ENCODE measurements at regions of chr13 and their contacts with region 1.

Region 1: GRCh38 chr13:108915634-108916512 is 286.5 kb downstream of the MYO16 start:
- DNase-seq: peak; percentile 95
- H3K4me3 Mint-ChIP-seq: peak overlapping the region; percentile 61
- H3K27ac Mint-ChIP-seq: peak overlapping the region; percentile 90
- H3K4me1 Mint-ChIP-seq: peaks cover 33% of the 10 kb centered on the region
- H3K27me3 Mint-ChIP-seq: no peaks in the 10 kb centered on the region
- CTCF ChIP-seq: no peak

Region 2: DNA sequence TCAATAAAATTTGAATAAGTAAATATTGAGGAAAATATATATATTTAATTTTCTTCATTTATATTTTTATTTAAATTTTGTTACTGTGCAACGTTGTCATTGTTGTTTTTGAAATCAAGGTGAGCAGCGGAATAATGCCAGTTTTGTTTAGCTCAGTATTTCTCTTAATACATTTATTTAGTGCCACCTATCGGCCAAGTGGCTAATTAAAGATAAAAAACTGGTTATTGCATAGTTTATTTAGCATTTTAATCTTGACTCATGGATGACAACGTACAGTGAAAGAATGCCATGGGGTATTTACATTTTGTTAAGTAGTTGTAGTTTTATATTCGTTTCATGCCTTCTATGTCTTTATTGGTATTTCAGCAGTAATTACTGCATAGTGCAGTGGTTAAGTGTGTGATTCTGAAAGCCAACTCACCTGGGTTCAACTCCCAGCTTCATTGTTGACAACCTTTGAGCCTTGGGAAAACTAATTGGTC is 20.6 kb before region 1 on chr13:
- CTCF ChIA-PET with region 1: interaction called, 12 read pairs
- POLR2A ChIA-PET with region 1: no interaction called
- intact Hi-C with region 1: no loop called
- DNase-seq: peak; percentile 67
- H3K4me3 Mint-ChIP-seq: no peak overlapping the region
- H3K27ac Mint-ChIP-seq: no peak overlapping the region
- H3K4me1 Mint-ChIP-seq: no peaks in the 10 kb centered on the region
- H3K27me3 Mint-ChIP-seq: peaks cover 29% of the 10 kb centered on the region
- CTCF ChIP-seq: peak; percentile 60

Region 3: GRCh38 chr13:108929532-108930206 is 13.8 kb after region 1 on chr13:
- CTCF ChIA-PET with region 1: interaction called, 12 read pairs
- POLR2A ChIA-PET with region 1: interaction called, 4 read pairs
- intact Hi-C with region 1: no loop called
- DNase-seq: peak; percentile 46
- H3K4me3 Mint-ChIP-seq: no peak overlapping the region
- H3K27ac Mint-ChIP-seq: no peak overlapping the region
- H3K4me1 Mint-ChIP-seq: peaks cover 14% of the 10 kb centered on the region
- H3K27me3 Mint-ChIP-seq: peaks cover 18% of the 10 kb centered on the region
- CTCF ChIP-seq: no peak

Region 4: GRCh38 chr13:108961542-108962125 is 45.8 kb after region 1 on chr13:
- CTCF ChIA-PET with region 1: interaction called, 74 read pairs
- POLR2A ChIA-PET with region 1: interaction called, 74 read pairs
- intact Hi-C with region 1: loop called (anchors 1 kb)
- DNase-seq: peak; percentile 57
- H3K4me3 Mint-ChIP-seq: no peak overlapping the region
- H3K27ac Mint-ChIP-seq: no peak overlapping the region
- H3K4me1 Mint-ChIP-seq: peaks cover 43% of the 10 kb centered on the region
- H3K27me3 Mint-ChIP-seq: no peaks in the 10 kb centered on the region
- CTCF ChIP-seq: peak; percentile 79

Region 5: DNA sequence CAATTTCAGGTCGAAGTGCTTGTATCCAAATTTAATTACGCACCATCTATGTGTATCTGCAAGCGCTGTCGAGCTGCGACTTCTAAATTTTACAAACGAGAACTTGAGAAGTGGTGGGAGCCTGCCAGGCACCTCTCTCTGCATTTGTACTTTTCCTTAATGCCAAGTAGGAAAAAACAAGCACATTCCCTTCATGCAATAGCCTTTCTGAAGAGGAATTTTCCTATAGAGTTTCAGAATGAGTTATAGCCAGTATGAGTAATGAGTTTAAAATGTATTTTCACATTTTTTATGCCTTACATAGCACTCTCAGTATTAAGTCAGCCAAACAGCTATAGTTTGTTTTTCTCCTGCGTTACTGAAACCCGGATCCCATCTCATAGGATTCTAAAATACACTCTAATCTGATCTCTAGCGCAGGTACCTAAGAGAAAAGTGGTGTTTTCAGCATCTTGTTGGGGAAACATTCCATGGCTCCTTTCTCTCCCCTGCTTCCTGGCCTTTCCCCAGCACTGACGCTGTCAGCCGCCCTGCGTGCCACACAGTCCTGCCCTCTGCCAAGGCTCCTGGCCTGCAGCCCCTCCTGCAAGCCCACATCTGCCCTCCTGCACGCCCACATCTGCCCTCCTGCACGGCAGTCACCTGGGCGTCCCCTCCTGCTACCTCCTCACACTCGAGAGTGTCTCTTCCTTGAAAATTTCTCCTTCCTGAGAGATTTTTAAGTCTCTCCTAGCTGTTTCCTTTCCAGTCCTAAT is 240.5 kb after region 1 on chr13:
- CTCF ChIA-PET with region 1: interaction called, 6 read pairs
- POLR2A ChIA-PET with region 1: interaction called, 21 read pairs
- intact Hi-C with region 1: no loop called
- DNase-seq: peak; percentile 82
- H3K4me3 Mint-ChIP-seq: peak overlapping the region; percentile 64
- H3K27ac Mint-ChIP-seq: peak overlapping the region; percentile 95
- H3K4me1 Mint-ChIP-seq: peaks cover 61% of the 10 kb centered on the region
- H3K27me3 Mint-ChIP-seq: no peaks in the 10 kb centered on the region
- CTCF ChIP-seq: no peak

Region 6: DNA sequence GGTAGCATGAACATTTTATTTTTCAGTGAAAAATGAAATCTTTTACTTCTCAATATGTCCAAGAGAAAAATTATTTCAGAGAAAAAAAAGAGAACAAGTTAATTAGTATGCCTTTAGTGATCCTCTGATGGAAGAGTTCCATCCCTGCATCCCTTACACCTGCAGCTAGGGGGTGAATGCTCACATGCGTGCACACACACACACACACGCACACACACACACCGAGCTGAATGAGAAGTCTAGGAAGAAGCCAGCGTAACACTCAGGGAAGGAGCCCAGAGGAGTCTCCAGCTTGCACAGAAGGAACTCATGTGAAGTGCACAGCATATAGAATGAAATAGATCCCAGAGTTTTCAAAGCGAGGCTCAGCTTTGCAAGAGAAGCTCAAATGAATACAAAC is 360.0 kb after region 1 on chr13:
- CTCF ChIA-PET with region 1: no interaction called
- POLR2A ChIA-PET with region 1: interaction called, 12 read pairs
- intact Hi-C with region 1: loop called (anchors 5 kb)
- DNase-seq: peak; percentile 41
- H3K4me3 Mint-ChIP-seq: no peak overlapping the region
- H3K27ac Mint-ChIP-seq: no peak overlapping the region
- H3K4me1 Mint-ChIP-seq: peaks cover 15% of the 10 kb centered on the region
- H3K27me3 Mint-ChIP-seq: no peaks in the 10 kb centered on the region
- CTCF ChIP-seq: no peak

Region 7: GRCh38 chr13:109786457-109787134 is 870.7 kb after region 1 on chr13 and contains the start of gene IRS2:
- CTCF ChIA-PET with region 1: interaction called, 12 read pairs
- POLR2A ChIA-PET with region 1: interaction called, 26 read pairs
- intact Hi-C with region 1: loop called (anchors 5 kb)
- DNase-seq: peak; percentile 92
- H3K4me3 Mint-ChIP-seq: peak within 1 kb of the TSS; percentile 84
- H3K27ac Mint-ChIP-seq: peak within 1 kb of the TSS; percentile 31
- H3K4me1 Mint-ChIP-seq: peaks cover 33% of the 10 kb centered on the region
- H3K27me3 Mint-ChIP-seq: no peaks in the 10 kb centered on the region
- CTCF ChIP-seq: no peak
- total RNA-seq, gene IRS2: 41.8 and 48.5 TPM in 2 replicates

Measured in MCF 10A (cell line).